GM12878 (cell line): ENCODE measurements at regions of chr13 and their contacts with region 1.

Region 1: DNA sequence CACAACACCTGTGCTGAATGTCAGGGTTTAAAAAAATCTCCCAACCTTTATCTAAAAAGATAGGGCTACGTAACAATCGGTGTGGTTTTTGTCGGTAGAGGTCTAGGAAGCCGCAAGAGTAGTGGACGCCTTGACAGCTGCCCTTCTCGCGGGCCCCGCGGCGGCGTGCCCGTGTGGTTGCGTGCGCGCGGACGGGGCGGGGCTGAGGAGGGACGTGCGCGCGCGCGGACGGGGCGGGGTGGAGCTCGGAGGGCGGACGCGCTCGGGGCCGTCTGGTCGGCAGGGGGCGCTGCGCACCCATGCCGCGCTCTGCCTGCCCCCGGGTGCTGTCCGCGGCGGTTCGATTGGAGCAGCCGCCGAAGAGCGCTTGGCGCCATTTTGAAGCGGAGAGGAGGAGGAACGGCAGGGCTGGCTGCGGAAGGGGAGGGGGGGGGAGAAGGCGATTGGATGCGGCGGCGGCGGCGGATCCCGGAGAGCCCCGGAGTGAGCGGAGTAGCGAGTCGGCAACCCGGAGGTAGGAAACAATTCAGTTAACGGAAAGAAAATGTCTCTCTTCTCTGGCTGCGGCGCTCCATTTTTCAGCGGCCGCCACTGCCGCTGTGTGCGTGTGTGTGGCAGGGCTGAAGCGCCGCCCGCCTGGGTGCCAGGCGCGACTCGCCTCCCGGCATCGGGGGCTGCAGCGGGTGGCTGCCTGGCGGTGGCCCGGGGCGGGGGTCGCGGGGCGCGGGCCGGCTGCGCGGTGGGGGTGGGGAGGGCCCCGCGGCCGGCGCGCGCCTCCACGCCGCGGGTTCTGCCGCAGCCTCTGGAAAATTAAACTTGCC is at the start of gene PDS5B:
- DNase-seq: peak; percentile 66
- ATAC-seq: peak; percentile 90
- H3K4me3 ChIP-seq: peak within 1 kb of the TSS; percentile 75
- H3K27ac ChIP-seq: peak within 1 kb of the TSS; percentile 84
- H3K4me1 ChIP-seq: peaks cover 4% of the 10 kb centered on the region; the same call in 1 of the 2 replicates
- H3K27me3 ChIP-seq: no peaks in the 10 kb centered on the region
- CTCF ChIP-seq: peak; percentile 68 to 96 (median 69); a peak in 4 of 6 replicates
- EP300 ChIP-seq: no peak
- POLR2A ChIP-seq: peak; percentile 71
- RAD21 ChIP-seq: peak; percentile 82
- polyA plus RNA-seq, gene PDS5B: 15.4 to 16.0 TPM

Region 2: DNA sequence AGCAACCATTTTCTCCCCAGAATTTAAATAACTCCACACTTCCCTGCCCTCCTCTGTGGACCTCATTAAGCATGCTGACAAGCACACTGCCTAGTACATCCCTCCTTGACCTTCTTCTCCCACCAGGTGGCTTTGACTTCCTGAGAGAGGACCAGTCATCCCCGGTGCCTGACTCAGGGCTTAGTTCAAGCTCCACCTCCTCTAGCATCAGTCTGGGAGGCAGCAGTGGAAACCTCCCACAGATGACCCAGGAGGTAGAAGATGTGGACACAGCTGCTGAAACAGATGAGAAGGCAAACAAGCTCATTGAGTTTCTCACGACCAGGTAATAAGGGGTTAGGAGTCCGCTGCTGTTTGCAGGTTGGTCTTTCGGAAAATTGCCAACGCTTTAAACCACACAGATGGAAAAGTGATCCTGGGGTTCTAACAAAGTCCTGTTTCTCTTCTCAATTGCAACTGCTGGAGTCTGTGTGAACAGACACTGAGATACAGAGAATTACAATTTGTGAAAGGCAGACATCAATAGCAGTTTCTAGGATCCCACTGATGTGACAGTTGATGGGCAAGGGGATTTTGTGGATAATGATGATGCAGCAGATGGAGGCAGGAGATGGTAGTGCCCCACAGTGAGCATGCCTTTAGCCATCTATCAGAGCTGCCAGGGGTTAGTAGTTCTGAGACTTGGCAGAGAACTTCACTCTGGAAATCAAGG is 357.8 kb before region 1 on chr13:
- CTCF ChIA-PET with region 1: no interaction called
- POLR2A ChIA-PET with region 1: no interaction called
- RAD21 ChIA-PET with region 1: no interaction called
- SMC1A ChIA-PET with region 1: no interaction called
- in situ Hi-C with region 1: no loop called
- intact Hi-C with region 1: no loop called
- DNase-seq: no peak
- ATAC-seq: no peak
- H3K4me3 ChIP-seq: no peak overlapping the region
- H3K27ac ChIP-seq: no peak overlapping the region
- H3K4me1 ChIP-seq: no peaks in the 10 kb centered on the region
- H3K27me3 ChIP-seq: no peaks in the 10 kb centered on the region
- CTCF ChIP-seq: no peak
- EP300 ChIP-seq: no peak
- POLR2A ChIP-seq: no peak
- RAD21 ChIP-seq: no peak

Region 3: DNA sequence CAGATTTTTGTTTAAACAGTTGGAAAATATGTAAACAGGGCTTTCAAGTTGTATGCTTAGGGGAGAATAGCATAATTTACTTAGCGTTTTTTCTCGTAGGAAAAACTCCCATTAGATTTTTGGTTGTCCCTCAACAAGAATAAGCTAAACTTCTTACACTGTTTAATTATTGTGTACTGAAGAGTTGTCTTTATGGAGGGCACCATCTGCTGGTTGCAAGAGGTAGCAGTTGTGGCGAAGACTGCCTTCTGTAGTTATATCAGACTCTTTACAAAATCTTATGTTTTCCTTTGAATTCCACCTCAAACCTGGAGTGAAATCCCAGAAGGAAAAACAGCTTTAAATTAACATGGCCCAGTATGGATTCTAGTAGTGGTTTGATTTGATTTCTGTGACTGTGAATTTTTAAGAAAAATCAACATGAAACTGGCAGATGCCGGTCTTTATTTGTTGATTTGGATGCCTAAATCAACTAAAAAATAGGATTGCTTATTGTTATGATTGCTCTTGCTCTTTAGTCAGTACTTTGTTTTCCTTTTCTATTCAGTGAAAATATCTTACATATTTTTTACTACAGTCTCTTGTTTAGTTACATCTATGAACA is 53.3 kb after region 1 on chr13:
- CTCF ChIA-PET with region 1: interaction called, 74 read pairs
- POLR2A ChIA-PET with region 1: interaction called, 11 read pairs
- RAD21 ChIA-PET with region 1: interaction called, 112 read pairs
- SMC1A ChIA-PET with region 1: interaction called, 79 read pairs
- in situ Hi-C with region 1: no loop called
- intact Hi-C with region 1: loop called (anchors 1 kb)
- DNase-seq: peak; percentile 15
- ATAC-seq: peak; percentile 91
- H3K4me3 ChIP-seq: no peak overlapping the region
- H3K27ac ChIP-seq: no peak overlapping the region
- H3K4me1 ChIP-seq: peaks cover 9% of the 10 kb centered on the region
- H3K27me3 ChIP-seq: no peaks in the 10 kb centered on the region
- CTCF ChIP-seq: peak; percentile 74 to 83 (median 75)
- EP300 ChIP-seq: no peak
- POLR2A ChIP-seq: no peak
- RAD21 ChIP-seq: peak; percentile 73

Region 4: GRCh38 chr13:32659736-32660626 is 73.7 kb after region 1 on chr13:
- CTCF ChIA-PET with region 1: interaction called, 6 read pairs
- POLR2A ChIA-PET with region 1: interaction called, 3 read pairs
- RAD21 ChIA-PET with region 1: interaction called, 5 read pairs
- SMC1A ChIA-PET with region 1: interaction called, 12 read pairs
- in situ Hi-C with region 1: no loop called
- intact Hi-C with region 1: no loop called
- DNase-seq: no peak
- ATAC-seq: no peak
- H3K4me3 ChIP-seq: no peak overlapping the region
- H3K27ac ChIP-seq: no peak overlapping the region
- H3K4me1 ChIP-seq: no peaks in the 10 kb centered on the region
- H3K27me3 ChIP-seq: no peaks in the 10 kb centered on the region
- CTCF ChIP-seq: no peak
- EP300 ChIP-seq: no peak
- POLR2A ChIP-seq: no peak
- RAD21 ChIP-seq: no peak

Region 5: DNA sequence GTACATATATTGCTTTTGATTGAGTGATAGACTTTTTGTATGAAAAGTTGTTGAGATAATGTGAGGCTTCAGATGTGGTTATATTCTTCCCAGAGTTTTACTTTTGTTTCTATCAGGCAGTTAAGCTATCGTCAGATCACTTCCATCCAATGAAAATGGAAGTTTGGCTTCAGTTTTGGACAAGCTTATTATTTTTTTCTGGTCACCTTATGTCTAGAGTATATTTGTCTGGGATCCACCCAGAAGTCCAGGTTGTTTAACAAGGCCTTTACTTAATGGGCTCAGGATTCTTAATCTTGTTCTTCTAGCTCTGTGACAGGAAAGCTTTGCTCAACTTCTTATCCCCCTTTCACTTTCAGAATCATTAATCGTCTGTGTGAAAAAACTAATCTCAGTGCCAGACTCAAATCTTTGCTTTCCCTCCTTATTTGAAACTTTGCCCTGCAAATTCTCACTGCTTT is 150.9 kb after region 1 on chr13:
- CTCF ChIA-PET with region 1: interaction called, 3 read pairs
- POLR2A ChIA-PET with region 1: no interaction called
- RAD21 ChIA-PET with region 1: interaction called, 7 read pairs
- SMC1A ChIA-PET with region 1: interaction called, 10 read pairs
- in situ Hi-C with region 1: no loop called
- intact Hi-C with region 1: loop called (anchors 5 kb)
- DNase-seq: peak; percentile 63
- ATAC-seq: peak; percentile 84
- H3K4me3 ChIP-seq: peak overlapping the region; percentile 51
- H3K27ac ChIP-seq: peak overlapping the region; percentile 90
- H3K4me1 ChIP-seq: no peaks in the 10 kb centered on the region
- H3K27me3 ChIP-seq: no peaks in the 10 kb centered on the region
- CTCF ChIP-seq: no peak
- EP300 ChIP-seq: no peak
- POLR2A ChIP-seq: no peak
- RAD21 ChIP-seq: no peak

Region 6: GRCh38 chr13:32911506-32911905 is 325.2 kb after region 1 on chr13:
- CTCF ChIA-PET with region 1: interaction called, 20 read pairs
- POLR2A ChIA-PET with region 1: no interaction called
- RAD21 ChIA-PET with region 1: interaction called, 13 read pairs
- SMC1A ChIA-PET with region 1: interaction called, 32 read pairs
- in situ Hi-C with region 1: no loop called
- intact Hi-C with region 1: loop called (anchors 5 kb)
- DNase-seq: no peak
- ATAC-seq: peak; percentile 99
- H3K4me3 ChIP-seq: no peak overlapping the region
- H3K27ac ChIP-seq: no peak overlapping the region
- H3K4me1 ChIP-seq: no peaks in the 10 kb centered on the region
- H3K27me3 ChIP-seq: no peaks in the 10 kb centered on the region
- CTCF ChIP-seq: peak; percentile 55 to 71 (median 71)
- EP300 ChIP-seq: no peak
- POLR2A ChIP-seq: no peak
- RAD21 ChIP-seq: peak; percentile 85